Right ventricle myocardium inferior (tissue), 1 donor: ENCODE measurements at regions of chr4 and their contacts with region 1.

Region 1: GRCh38 chr4:38062088-38062893 is 102.1 kb downstream of the PTTG2 start:
- DNase-seq: no peak
- ATAC-seq: peak; percentile 77

Region 2: DNA sequence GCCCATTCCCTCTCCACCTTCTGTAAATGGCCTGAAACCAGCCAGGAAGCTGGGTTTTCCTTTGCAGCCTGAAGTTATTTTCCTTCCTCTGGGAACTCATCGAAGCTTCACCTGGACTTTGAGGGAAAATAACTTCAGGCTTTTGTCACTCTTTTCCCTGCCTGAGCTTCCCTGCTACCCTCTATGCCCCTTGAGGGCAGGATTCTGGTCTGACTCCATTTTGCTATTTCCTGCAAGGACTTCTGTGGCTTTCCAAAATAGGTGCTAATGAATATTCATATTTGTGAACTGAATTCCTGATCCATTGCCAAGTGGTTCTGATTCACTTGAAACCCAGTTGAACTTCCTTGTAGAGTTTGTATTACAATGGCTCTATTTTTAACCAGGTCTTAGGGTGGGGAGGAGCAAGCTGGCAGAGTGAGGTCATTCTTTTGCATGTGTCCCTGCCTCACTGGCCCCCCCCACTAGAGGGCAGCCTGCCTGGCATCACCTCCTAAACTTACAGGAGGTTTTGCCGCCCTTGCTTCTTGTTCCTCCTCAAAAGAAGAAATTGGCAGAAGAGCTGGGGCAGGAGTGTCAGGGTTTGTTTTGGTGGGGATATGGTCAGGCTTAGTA is 91.7 kb before region 1 on chr4:
- intact Hi-C with region 1: no loop called
- DNase-seq: peak; percentile 89
- ATAC-seq: peak; percentile 77

Region 3: DNA sequence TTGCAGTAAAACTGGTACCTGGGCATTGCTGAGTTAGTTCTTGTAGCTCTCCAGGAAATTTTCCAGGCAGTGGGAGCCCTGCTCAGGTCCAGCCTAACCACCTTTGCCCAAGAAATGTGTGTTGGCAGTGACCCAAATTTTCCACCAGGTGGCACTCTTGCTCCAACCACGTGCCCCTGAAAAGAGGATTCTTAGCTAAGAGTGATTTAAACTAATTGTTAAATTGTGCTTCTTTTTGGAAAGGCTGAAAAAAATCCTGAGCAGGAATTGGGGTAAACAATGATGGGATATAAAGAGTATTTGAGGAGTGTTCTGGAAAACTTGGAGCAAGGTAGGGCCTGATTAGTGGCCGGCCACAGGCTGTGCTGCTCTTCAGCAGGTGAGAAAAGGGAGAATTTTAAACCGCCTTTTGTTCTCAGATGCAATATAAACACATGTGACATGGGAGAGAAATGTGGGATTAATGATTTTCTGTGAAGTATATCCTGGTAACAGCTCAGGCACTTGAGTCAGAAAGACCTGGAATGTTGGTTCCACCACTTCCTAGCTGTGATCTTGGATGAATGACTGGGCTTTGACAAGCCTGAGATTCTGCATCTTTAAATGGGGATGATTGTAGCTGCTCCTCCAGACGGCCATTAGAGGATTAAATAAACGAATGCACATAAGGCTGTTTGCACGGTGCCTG is 117.5 kb after region 1 on chr4:
- intact Hi-C with region 1: loop called (anchors 5 kb)
- DNase-seq: no peak
- ATAC-seq: peak; percentile 51